WTC11 (cell line): ENCODE measurements at regions of chr16 and their contacts with region 1.

Region 1: GRCh38 chr16:70770626-70771552 is 30.1 kb downstream of the VAC14 start:
- DNase-seq: peak; percentile 86
- ATAC-seq: peak; percentile 92
- H3K4me3 Mint-ChIP-seq: no peak overlapping the region
- H3K27ac Mint-ChIP-seq: no peak overlapping the region
- H3K4me1 Mint-ChIP-seq: no peaks in the 10 kb centered on the region
- H3K27me3 Mint-ChIP-seq: no peaks in the 10 kb centered on the region
- CTCF ChIP-seq: peak; percentile 99

Region 2: GRCh38 chr16:70660672-70661350 is 110.1 kb before region 1 on chr16:
- CTCF ChIA-PET with region 1: interaction called, 20 read pairs
- POLR2A ChIA-PET with region 1: no interaction called
- DNase-seq: no peak
- ATAC-seq: peak; percentile 78
- H3K4me3 Mint-ChIP-seq: no peak overlapping the region
- H3K27ac Mint-ChIP-seq: no peak overlapping the region
- H3K4me1 Mint-ChIP-seq: peaks cover 13% of the 10 kb centered on the region
- H3K27me3 Mint-ChIP-seq: no peaks in the 10 kb centered on the region
- CTCF ChIP-seq: no peak

Region 3: GRCh38 chr16:70715055-70715858 is 55.6 kb before region 1 on chr16:
- CTCF ChIA-PET with region 1: interaction called, 13 read pairs
- POLR2A ChIA-PET with region 1: no interaction called
- DNase-seq: no peak
- ATAC-seq: peak; percentile 46
- H3K4me3 Mint-ChIP-seq: no peak overlapping the region
- H3K27ac Mint-ChIP-seq: no peak overlapping the region; the same call in 1 of the 2 replicates
- H3K4me1 Mint-ChIP-seq: peaks cover 48% of the 10 kb centered on the region
- H3K27me3 Mint-ChIP-seq: no peaks in the 10 kb centered on the region
- CTCF ChIP-seq: no peak

Region 4: DNA sequence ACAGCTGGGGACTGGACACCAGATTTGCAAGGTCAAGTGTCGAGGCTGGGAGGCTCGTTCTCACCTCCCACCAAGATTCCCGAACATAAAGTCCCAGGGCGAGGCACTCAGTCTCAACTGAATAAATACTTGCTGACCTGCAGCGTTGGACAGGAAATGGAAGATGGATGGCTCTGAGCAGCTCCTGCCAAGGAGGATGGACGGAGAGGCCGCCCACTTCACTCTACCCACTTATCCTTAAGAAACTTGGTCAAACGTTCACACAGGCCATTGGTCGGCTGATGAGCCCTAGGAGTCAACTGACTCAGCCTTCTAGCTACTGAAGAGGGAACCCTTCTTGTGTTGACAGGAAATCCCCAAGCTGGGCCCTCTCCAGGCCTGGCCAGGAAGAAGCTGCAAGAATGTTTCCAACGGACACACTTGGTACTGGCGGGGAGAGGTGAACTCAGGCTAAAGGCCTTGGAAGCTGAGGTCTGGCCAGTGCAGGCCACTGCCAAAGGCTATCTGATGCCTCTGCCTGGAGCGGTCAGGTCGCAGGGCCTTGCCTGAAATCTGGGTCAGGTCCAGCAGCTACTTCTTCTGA is 19.9 kb before region 1 on chr16:
- CTCF ChIA-PET with region 1: interaction called, 32 read pairs
- POLR2A ChIA-PET with region 1: no interaction called
- DNase-seq: no peak
- ATAC-seq: no peak
- H3K4me3 Mint-ChIP-seq: no peak overlapping the region
- H3K27ac Mint-ChIP-seq: no peak overlapping the region
- H3K4me1 Mint-ChIP-seq: peaks cover 13% of the 10 kb centered on the region
- H3K27me3 Mint-ChIP-seq: no peaks in the 10 kb centered on the region
- CTCF ChIP-seq: no peak